ENCODE measurements at regions of chr13 and their contacts with region 1.

Region 1: GRCh38 chr13:114132419-114133121 is at the start of gene RASA3:
- DNase-seq: peak; percentile 73
- ATAC-seq: peak; percentile 67
- H3K4me3 Mint-ChIP-seq: peak within 1 kb of the TSS; percentile 93
- H3K27ac Mint-ChIP-seq: peak within 1 kb of the TSS; percentile 76
- H3K4me1 Mint-ChIP-seq: peaks cover 56% of the 10 kb centered on the region
- H3K27me3 Mint-ChIP-seq: no peaks in the 10 kb centered on the region
- CTCF ChIP-seq: no peak
- total RNA-seq, gene RASA3: 17.5 and 20.4 TPM in 2 replicates

Region 2: DNA sequence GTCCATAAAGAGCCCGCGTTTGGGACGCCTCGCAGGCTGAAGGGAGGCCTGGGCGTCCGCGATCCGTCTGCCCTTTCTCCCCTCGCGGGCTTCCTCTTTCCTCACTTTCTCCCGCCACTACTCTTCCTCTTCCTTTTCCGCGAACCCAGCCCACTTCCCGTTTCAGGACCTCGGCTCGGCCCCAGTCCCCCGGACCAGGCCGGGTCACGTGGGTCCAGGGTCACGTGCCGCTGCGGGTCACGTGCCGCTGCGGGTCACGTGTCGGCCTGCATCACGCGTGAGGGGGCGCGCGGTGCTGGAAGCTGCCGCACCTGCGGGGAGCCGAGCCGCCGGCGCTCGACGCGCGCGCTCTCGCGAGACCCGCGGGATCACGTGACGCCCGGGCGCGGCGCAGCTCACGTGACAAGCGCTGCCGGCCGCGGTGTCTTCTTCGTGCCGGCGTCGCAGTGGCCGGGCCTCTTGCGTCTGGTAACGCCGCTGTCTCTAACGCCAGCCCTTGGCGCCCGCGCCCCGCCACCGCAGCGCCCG is 835.7 kb before region 1 on chr13 and contains the start of gene LAMP1:
- CTCF ChIA-PET with region 1: no interaction called
- POLR2A ChIA-PET with region 1: no interaction called
- intact Hi-C with region 1: loop called (anchors 5 kb)
- DNase-seq: peak; percentile 100
- ATAC-seq: peak; percentile 80
- H3K4me3 Mint-ChIP-seq: peak within 1 kb of the TSS; percentile 94
- H3K27ac Mint-ChIP-seq: peak within 1 kb of the TSS; percentile 98
- H3K4me1 Mint-ChIP-seq: peaks cover 45% of the 10 kb centered on the region
- H3K27me3 Mint-ChIP-seq: peaks cover 16% of the 10 kb centered on the region
- CTCF ChIP-seq: no peak
- total RNA-seq, gene LAMP1: 83.7 and 86.2 TPM in 2 replicates

Region 3: GRCh38 chr13:113954046-113954835 is 178.3 kb before region 1 on chr13:
- CTCF ChIA-PET with region 1: no interaction called
- POLR2A ChIA-PET with region 1: no interaction called
- intact Hi-C with region 1: no loop called
- DNase-seq: no peak
- ATAC-seq: no peak
- H3K4me3 Mint-ChIP-seq: no peak overlapping the region
- H3K27ac Mint-ChIP-seq: no peak overlapping the region
- H3K4me1 Mint-ChIP-seq: peaks cover 5% of the 10 kb centered on the region
- H3K27me3 Mint-ChIP-seq: no peaks in the 10 kb centered on the region
- CTCF ChIP-seq: no peak

Region 4: GRCh38 chr13:113968463-113969310 is 163.9 kb before region 1 on chr13:
- CTCF ChIA-PET with region 1: no interaction called
- POLR2A ChIA-PET with region 1: no interaction called
- intact Hi-C with region 1: no loop called
- DNase-seq: no peak
- ATAC-seq: no peak
- H3K4me3 Mint-ChIP-seq: no peak overlapping the region
- H3K27ac Mint-ChIP-seq: no peak overlapping the region
- H3K4me1 Mint-ChIP-seq: no peaks in the 10 kb centered on the region
- H3K27me3 Mint-ChIP-seq: no peaks in the 10 kb centered on the region
- CTCF ChIP-seq: no peak

Region 5: DNA sequence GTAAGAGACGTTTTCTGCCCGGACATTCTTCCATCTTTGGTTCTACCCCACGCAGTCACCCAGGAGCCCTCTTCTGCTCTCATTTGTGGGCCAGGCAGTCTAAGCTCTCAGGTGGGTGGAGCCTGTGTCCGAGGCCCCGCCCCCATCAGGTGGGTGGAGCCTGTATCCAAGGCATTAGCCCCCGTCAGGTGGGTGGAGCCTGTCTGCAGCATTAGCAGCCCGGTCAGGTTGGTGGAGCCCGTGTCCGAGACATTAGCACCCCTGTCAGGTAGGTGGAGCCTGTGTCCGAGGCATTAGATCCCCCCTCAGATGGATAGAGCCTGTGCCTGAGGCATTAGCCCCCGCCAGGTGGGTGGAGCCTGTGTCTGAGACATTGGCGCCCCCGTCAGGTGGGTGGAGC is 113.2 kb before region 1 on chr13:
- CTCF ChIA-PET with region 1: no interaction called
- POLR2A ChIA-PET with region 1: no interaction called
- intact Hi-C with region 1: no loop called
- DNase-seq: no peak
- ATAC-seq: peak; percentile 43
- H3K4me3 Mint-ChIP-seq: no peak overlapping the region
- H3K27ac Mint-ChIP-seq: no peak overlapping the region
- H3K4me1 Mint-ChIP-seq: peaks cover 28% of the 10 kb centered on the region
- H3K27me3 Mint-ChIP-seq: no peaks in the 10 kb centered on the region
- CTCF ChIP-seq: no peak

Region 6: GRCh38 chr13:114047358-114047881 is 85.2 kb before region 1 on chr13:
- CTCF ChIA-PET with region 1: no interaction called
- POLR2A ChIA-PET with region 1: interaction called, 4 read pairs
- intact Hi-C with region 1: loop called (anchors 1 kb)
- DNase-seq: no peak
- ATAC-seq: no peak
- H3K4me3 Mint-ChIP-seq: peak overlapping the region; percentile 58
- H3K27ac Mint-ChIP-seq: peak overlapping the region; percentile 74
- H3K4me1 Mint-ChIP-seq: peaks cover 78% of the 10 kb centered on the region
- H3K27me3 Mint-ChIP-seq: no peaks in the 10 kb centered on the region
- CTCF ChIP-seq: no peak

Region 7: DNA sequence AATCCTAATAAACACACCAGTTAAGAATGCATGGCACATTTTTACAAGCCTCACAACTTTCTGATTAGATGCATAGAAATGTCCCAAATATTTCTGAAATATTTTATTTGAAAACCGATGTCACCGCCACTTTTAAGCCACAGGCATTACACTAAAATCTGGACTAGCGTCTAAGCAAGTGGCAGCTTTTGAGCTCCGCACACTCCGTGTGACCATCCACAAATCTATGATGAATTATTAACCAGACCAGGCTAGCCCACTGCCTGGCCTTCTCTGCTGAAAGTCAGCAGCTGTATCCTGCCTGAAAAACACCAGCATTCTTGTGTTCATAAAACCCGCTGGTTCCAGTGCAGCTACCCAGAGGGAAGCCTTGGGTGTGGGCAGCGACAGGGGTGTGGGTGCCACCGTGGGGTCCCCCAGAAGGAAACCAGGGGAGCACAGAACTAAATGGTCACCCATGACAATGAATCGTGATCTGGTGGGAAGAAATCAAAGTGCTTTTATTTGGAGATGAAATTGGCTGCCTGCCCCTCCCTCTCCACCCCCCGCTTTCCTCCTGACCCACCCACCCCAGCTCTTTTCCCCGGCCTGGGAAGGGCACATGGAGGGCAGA is 14.0 kb before region 1 on chr13:
- CTCF ChIA-PET with region 1: no interaction called
- POLR2A ChIA-PET with region 1: interaction called, 3 read pairs
- intact Hi-C with region 1: loop called (anchors 1 kb)
- DNase-seq: no peak
- ATAC-seq: no peak
- H3K4me3 Mint-ChIP-seq: no peak overlapping the region
- H3K27ac Mint-ChIP-seq: peak overlapping the region; percentile 22
- H3K4me1 Mint-ChIP-seq: peaks cover 61% of the 10 kb centered on the region
- H3K27me3 Mint-ChIP-seq: no peaks in the 10 kb centered on the region
- CTCF ChIP-seq: no peak

Region 8: DNA sequence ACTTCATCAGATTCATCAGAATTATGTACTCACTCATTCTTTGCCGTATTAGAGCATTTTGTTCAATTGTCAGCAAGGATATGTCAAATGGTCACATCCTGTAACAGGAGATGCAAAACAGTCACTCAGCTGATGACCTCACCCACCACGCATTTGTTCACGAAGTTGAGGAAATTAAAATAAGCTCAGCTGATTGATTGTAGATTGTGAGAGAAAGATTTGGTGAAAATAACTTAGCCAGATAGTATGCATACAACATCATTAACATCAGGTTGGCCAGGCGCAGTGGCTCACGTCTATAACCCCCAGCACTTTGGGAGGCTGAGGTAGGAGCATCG is 79.6 kb after region 1 on chr13:
- CTCF ChIA-PET with region 1: no interaction called
- POLR2A ChIA-PET with region 1: no interaction called
- intact Hi-C with region 1: no loop called
- DNase-seq: no peak
- ATAC-seq: no peak
- H3K4me3 Mint-ChIP-seq: no peak overlapping the region
- H3K27ac Mint-ChIP-seq: no peak overlapping the region
- H3K4me1 Mint-ChIP-seq: no peaks in the 10 kb centered on the region
- H3K27me3 Mint-ChIP-seq: peaks cover 23% of the 10 kb centered on the region
- CTCF ChIP-seq: no peak

Region 9: DNA sequence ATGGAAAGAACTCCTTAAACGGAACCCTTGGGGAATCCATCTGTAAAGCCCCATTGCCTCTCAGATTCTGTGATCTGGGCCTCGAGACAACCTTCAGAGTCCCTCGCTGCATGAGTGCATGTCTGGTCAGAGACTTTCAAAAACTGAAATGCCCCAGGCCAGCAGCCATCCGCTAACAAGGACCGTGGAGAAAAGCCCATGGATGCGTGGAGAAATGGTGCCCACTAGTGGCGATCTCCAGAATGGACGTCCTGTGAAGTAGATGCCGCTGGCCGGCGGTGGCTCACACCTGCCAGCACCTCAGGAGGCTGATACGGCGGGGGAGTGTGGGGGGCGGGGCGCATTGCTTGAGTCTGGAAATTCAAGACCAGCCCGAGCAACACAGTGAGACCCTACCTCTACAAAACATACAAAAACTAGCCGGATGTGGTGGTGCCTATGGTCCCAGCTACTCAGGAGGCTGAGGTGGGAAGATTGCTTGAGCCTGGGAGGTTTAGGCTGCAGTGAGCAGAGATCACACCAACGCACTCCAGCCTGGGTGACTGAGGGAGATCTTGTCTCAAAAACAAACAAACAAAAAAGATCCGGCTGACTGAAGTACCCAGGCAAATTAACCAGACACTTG is 94.2 kb after region 1 on chr13:
- CTCF ChIA-PET with region 1: interaction called, 3 read pairs
- POLR2A ChIA-PET with region 1: no interaction called
- intact Hi-C with region 1: loop called (anchors 1 kb)
- DNase-seq: peak; percentile 74
- ATAC-seq: peak; percentile 94
- H3K4me3 Mint-ChIP-seq: no peak overlapping the region
- H3K27ac Mint-ChIP-seq: no peak overlapping the region
- H3K4me1 Mint-ChIP-seq: peaks cover 19% of the 10 kb centered on the region
- H3K27me3 Mint-ChIP-seq: peaks cover 14% of the 10 kb centered on the region
- CTCF ChIP-seq: no peak